ENCODE measurements at regions of chr15 and their contacts with region 1.

Region 1: DNA sequence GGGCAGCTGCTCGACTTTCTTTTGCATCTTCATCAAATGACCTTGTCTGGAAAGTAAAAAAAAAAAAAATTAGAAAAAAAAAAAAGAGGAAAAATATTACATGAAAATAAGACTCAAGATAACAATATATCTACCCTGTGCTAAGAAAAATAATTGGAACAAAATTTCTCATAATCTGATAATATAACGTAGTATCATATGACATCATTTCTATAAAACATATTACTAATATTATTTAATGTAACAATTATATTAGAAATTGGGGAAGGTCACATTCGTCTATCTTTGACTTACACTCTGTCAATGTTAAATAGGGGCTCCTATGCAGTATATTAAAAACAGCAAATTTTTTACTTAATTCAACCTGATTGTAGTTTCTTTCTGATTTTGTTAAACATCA is 44.1 kb downstream of the INO80 start:
- DNase-seq: no peak
- H3K4me3 ChIP-seq: no peak overlapping the region
- H3K27ac ChIP-seq: no peak overlapping the region
- H3K4me1 ChIP-seq: no peaks in the 10 kb centered on the region
- H3K27me3 ChIP-seq: no peaks in the 10 kb centered on the region
- CTCF ChIP-seq: no peak

Region 2: GRCh38 chr15:40960181-40960885 is 111.7 kb before region 1 on chr15:
- CTCF ChIA-PET with region 1: no interaction called
- POLR2A ChIA-PET with region 1: interaction called, 11 read pairs
- intact Hi-C with region 1: no loop called
- DNase-seq: no peak
- H3K4me3 ChIP-seq: no peak overlapping the region
- H3K27ac ChIP-seq: no peak overlapping the region
- H3K4me1 ChIP-seq: peaks cover 24% of the 10 kb centered on the region
- H3K27me3 ChIP-seq: no peaks in the 10 kb centered on the region
- CTCF ChIP-seq: no peak

Region 3: DNA sequence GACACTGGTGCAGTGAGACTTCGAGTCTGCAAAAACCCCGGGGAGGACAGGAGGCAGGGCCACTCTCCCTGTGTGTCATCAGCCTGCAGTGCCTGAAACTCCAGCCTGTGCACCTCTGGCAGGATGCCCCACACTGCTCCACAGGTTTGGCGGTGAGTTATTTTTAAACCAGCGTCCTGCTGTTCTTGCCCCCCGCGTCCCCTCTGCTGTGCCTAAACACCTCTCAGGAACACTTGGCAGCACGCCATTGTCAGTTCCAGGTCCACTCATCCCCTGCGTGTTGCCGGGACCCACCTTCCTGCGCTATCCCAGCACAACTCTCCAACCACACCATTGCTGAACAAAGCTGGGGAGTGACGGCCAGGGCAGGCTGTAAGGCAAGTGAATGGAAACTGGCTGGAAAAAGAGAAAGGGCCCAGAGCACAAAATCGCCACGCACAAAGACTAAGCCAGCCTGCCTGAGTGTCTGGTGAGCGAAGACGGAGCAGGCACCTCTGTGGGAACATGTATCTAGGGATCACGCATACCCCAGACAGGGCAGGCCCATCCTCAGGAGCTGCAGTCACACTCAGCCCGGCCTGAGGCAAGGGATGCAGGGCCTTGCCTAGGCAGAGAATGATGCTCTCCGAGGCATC is 1087.5 kb after region 1 on chr15:
- CTCF ChIA-PET with region 1: no interaction called
- POLR2A ChIA-PET with region 1: no interaction called
- intact Hi-C with region 1: no loop called
- DNase-seq: no peak
- H3K4me3 ChIP-seq: no peak overlapping the region
- H3K27ac ChIP-seq: no peak overlapping the region
- H3K4me1 ChIP-seq: no peaks in the 10 kb centered on the region
- H3K27me3 ChIP-seq: no peaks in the 10 kb centered on the region
- CTCF ChIP-seq: no peak

Measured in A673 (cell line).